Activated B cell treated with CpG ODN at 0.5 μM for 24 hours (primary cell): ENCODE measurements at regions of chr2 and their contacts with region 1.

Region 1: DNA sequence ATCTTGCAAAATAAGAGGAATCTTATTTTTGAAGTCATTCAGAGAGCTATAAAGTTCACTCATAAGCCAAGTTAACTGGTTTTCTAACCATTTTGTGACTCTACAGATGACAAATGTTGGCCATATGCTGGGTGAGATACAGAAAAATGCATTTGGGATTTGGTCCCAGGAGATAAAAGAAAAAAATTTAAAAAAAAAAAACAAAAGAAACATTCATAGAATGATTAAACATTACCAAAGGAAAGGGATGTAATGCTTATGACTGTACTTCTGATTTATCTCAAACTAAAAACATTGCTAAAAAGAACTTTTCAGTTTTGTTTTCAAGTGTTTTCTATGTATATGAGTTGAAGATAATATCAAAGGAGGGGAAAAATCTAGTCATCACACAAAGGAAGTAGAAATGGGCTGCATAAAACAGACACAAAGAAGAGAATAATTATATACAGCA is 43.1 kb downstream of the PELI1 start:
- DNase-seq: no peak
- ATAC-seq: no peak
- H3K4me3 Mint-ChIP-seq: peak overlapping the region; percentile 41
- H3K27ac Mint-ChIP-seq: peak overlapping the region; percentile 75
- H3K4me1 Mint-ChIP-seq: peaks cover 63% of the 10 kb centered on the region
- H3K27me3 Mint-ChIP-seq: no peaks in the 10 kb centered on the region
- CTCF ChIP-seq: no peak

Region 2: GRCh38 chr2:64086347-64087082 is 14.7 kb before region 1 on chr2:
- CTCF ChIA-PET with region 1: no interaction called
- POLR2A ChIA-PET with region 1: interaction called, 5 read pairs
- intact Hi-C with region 1: loop called (anchors 2 kb)
- DNase-seq: no peak
- ATAC-seq: peak; percentile 61
- H3K4me3 Mint-ChIP-seq: peak overlapping the region; percentile 58
- H3K27ac Mint-ChIP-seq: peak overlapping the region; percentile 84
- H3K4me1 Mint-ChIP-seq: peaks cover 68% of the 10 kb centered on the region
- H3K27me3 Mint-ChIP-seq: no peaks in the 10 kb centered on the region
- CTCF ChIP-seq: no peak

Region 3: GRCh38 chr2:64192125-64192479 is 90.9 kb after region 1 on chr2:
- CTCF ChIA-PET with region 1: no interaction called
- POLR2A ChIA-PET with region 1: interaction called, 10 read pairs
- intact Hi-C with region 1: no loop called
- DNase-seq: no peak
- ATAC-seq: peak; percentile 83
- H3K4me3 Mint-ChIP-seq: peak overlapping the region; percentile 50
- H3K27ac Mint-ChIP-seq: peak overlapping the region; percentile 50
- H3K4me1 Mint-ChIP-seq: peaks cover 41% of the 10 kb centered on the region
- H3K27me3 Mint-ChIP-seq: no peaks in the 10 kb centered on the region
- CTCF ChIP-seq: no peak